ENCODE measurements at regions of chr4 and their contacts with region 1.

Region 1: DNA sequence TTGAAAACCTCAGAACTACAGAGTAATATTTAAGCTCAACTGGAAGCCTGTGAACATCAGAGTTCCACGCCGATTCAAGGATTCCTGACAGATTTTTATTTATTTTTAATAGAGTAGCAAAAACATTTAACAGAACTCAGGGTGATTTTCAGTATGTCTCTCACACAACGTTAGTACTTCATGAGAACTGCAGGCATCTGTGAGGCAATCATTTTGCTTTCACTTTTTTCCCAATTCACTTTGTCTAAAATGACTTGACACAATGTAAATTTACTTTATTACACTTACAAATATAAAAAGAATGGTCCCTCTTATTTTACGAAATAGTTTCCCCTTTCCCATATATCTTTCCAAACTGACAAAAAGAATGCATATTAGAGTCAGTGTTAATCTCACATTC is 869.5 kb upstream of the EPHA5 start:
- DNase-seq: no peak
- ATAC-seq: no peak
- H3K4me3 ChIP-seq: no peak overlapping the region
- H3K4me3 Mint-ChIP-seq: no peak overlapping the region
- H3K27ac ChIP-seq: no peak overlapping the region
- H3K27ac Mint-ChIP-seq: no peak overlapping the region
- H3K4me1 ChIP-seq: no peaks in the 10 kb centered on the region
- H3K4me1 Mint-ChIP-seq: no peaks in the 10 kb centered on the region
- H3K27me3 ChIP-seq: no peaks in the 10 kb centered on the region
- H3K27me3 Mint-ChIP-seq: no peaks in the 10 kb centered on the region
- CTCF ChIP-seq: no peak

Region 2: DNA sequence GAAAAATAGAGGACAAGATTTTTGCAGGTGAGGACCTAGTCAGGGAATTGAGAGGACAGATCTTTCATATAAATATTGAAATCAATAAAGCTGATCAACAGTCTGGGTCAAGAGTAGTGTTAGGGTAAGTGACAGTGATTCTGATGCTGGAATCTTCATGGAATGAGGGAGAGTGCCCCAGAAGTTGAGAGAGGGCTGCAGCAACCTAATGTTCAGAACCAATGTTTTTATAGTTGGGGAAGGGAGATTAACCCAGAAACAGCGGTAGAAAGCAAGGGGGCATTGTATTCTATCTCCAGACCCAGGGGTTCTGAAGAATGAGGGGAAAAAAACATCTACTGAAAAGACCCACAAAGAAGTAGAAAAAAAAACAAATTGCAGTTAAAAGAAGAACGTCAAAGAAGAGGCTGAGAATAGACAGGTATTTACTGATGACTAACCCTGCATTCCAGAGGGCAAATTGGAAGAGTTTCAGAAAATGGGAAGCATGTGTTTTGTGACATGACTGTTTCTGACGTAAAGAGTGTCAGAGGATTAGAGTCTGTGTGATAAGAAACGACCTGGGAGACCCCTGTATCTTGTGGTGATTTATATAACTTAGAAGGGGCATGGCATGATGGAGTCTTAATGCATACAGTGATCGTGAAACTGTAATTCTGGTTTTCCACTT is 49.8 kb before region 1 on chr4:
- CTCF ChIA-PET with region 1: no interaction called
- POLR2A ChIA-PET with region 1: no interaction called
- intact Hi-C with region 1: loop called in 1 of 2 experiments (anchors 1 kb)
- DNase-seq: no peak
- ATAC-seq: no peak
- H3K4me3 ChIP-seq: no peak overlapping the region
- H3K4me3 Mint-ChIP-seq: no peak overlapping the region
- H3K27ac ChIP-seq: no peak overlapping the region
- H3K27ac Mint-ChIP-seq: no peak overlapping the region
- H3K4me1 ChIP-seq: no peaks in the 10 kb centered on the region
- H3K4me1 Mint-ChIP-seq: no peaks in the 10 kb centered on the region
- H3K27me3 ChIP-seq: no peaks in the 10 kb centered on the region
- H3K27me3 Mint-ChIP-seq: no peaks in the 10 kb centered on the region
- CTCF ChIP-seq: no peak

Region 3: GRCh38 chr4:66613591-66613990 is 73.8 kb after region 1 on chr4:
- CTCF ChIA-PET with region 1: no interaction called
- POLR2A ChIA-PET with region 1: no interaction called
- intact Hi-C with region 1: no loop called
- DNase-seq: no peak
- ATAC-seq: no peak
- H3K4me3 ChIP-seq: no peak overlapping the region
- H3K4me3 Mint-ChIP-seq: no peak overlapping the region
- H3K27ac ChIP-seq: no peak overlapping the region
- H3K27ac Mint-ChIP-seq: no peak overlapping the region
- H3K4me1 ChIP-seq: no peaks in the 10 kb centered on the region
- H3K4me1 Mint-ChIP-seq: no peaks in the 10 kb centered on the region
- H3K27me3 ChIP-seq: no peaks in the 10 kb centered on the region
- H3K27me3 Mint-ChIP-seq: no peaks in the 10 kb centered on the region
- CTCF ChIP-seq: no peak

Region 4: DNA sequence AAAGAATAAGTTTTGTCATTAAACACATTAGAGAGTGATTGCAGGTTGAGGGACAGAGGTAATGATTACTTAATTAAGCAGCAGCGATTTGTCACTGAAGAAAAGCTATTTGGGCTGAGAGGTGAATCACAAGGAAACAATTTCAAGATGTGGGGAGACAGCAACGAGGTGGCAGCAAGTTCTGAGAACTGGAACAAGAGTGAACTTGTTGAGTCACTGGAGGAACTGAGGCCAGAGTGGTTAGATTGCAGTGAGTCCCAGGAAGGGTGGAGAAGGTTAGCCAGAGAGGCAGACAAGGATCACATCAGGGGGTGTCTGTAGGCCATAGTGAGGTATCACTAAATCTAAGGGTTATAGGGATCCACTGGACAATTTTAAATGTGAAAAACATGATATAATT is 1481.4 kb after region 1 on chr4:
- CTCF ChIA-PET with region 1: no interaction called
- POLR2A ChIA-PET with region 1: no interaction called
- intact Hi-C with region 1: no loop called
- DNase-seq: no peak
- ATAC-seq: no peak
- H3K4me3 ChIP-seq: no peak overlapping the region
- H3K4me3 Mint-ChIP-seq: no peak overlapping the region
- H3K27ac ChIP-seq: no peak overlapping the region
- H3K27ac Mint-ChIP-seq: no peak overlapping the region
- H3K4me1 ChIP-seq: no peaks in the 10 kb centered on the region
- H3K4me1 Mint-ChIP-seq: no peaks in the 10 kb centered on the region
- H3K27me3 ChIP-seq: no peaks in the 10 kb centered on the region
- H3K27me3 Mint-ChIP-seq: no peaks in the 10 kb centered on the region
- CTCF ChIP-seq: no peak

Measured in CD8-positive, alpha-beta T cell (primary cell).